MCF 10A (cell line): ENCODE measurements at regions of chr9 and their contacts with region 1.

Region 1: GRCh38 chr9:128361986-128362646 is 9.1 kb upstream of the URM1 start:
- DNase-seq: peak; percentile 86
- H3K4me3 Mint-ChIP-seq: peak overlapping the region; percentile 82
- H3K27ac Mint-ChIP-seq: no peak overlapping the region
- H3K4me1 Mint-ChIP-seq: peaks cover 6% of the 10 kb centered on the region
- H3K27me3 Mint-ChIP-seq: no peaks in the 10 kb centered on the region
- CTCF ChIP-seq: peak; percentile 87

Region 2: GRCh38 chr9:128322404-128323211 is 39.5 kb before region 1 on chr9 and contains the starts of genes COQ4 and TRUB2:
- CTCF ChIA-PET with region 1: interaction called, 10 read pairs
- POLR2A ChIA-PET with region 1: no interaction called
- intact Hi-C with region 1: no loop called
- DNase-seq: peak; percentile 95
- H3K4me3 Mint-ChIP-seq: peak within 1 kb of the TSS; percentile 86
- H3K27ac Mint-ChIP-seq: peak within 1 kb of the TSS; percentile 95
- H3K4me1 Mint-ChIP-seq: peaks cover 8% of the 10 kb centered on the region
- H3K27me3 Mint-ChIP-seq: no peaks in the 10 kb centered on the region
- CTCF ChIP-seq: no peak
- total RNA-seq, gene COQ4: 57.1 and 58.9 TPM in 2 replicates
- total RNA-seq, gene TRUB2: 36.1 and 37.6 TPM in 2 replicates

Region 3: DNA sequence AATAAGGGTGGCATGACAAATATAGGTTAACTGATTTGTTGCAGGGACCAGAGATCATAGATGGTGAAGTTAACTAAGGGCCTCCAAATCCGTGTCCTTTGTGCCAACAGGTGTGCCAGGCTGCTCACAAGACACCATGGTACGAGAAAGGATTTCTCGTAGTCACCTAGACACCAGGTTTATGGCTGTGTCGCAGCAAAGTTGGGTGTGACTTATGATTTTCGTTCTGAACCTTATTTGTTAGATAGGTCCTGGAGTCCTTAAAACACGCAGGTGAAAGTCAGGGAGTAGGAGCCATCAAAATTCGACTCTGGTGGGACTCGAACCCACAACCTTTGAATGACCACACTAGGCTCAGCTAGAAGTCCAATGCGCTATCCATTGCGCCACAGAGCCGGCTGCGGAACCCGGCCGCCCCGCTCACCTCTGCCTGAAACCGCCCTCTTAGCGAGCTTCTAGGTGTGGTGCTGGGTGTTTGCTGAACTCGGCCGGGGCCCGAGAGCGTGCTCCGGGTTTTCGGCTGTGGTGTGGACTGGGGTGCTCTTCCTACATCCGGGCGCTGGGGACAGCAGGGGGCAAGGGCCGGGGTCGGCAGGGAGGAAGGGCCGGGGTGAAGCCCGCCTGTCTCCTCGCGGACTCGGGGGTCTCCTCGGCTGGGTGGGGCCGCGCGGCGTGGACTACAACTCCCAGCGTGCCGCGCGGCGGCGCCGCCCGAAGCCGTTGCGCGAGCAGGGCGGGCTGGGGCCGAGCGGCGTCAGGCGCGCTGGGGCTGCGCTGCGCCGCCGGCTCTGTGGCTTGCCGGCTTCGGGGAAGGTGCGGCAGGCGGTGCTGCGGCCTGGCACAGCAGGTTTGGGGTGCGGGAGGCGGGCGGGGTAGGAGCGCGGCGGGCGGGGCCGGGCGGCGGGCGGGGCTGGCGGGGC is 22.1 kb before region 1 on chr9 and contains the start of gene SLC27A4:
- CTCF ChIA-PET with region 1: interaction called, 10 read pairs
- POLR2A ChIA-PET with region 1: interaction called, 4 read pairs
- intact Hi-C with region 1: no loop called
- DNase-seq: peak; percentile 91
- H3K4me3 Mint-ChIP-seq: peak within 1 kb of the TSS; percentile 92
- H3K27ac Mint-ChIP-seq: peak within 1 kb of the TSS; percentile 93
- H3K4me1 Mint-ChIP-seq: peaks cover 6% of the 10 kb centered on the region
- H3K27me3 Mint-ChIP-seq: no peaks in the 10 kb centered on the region
- CTCF ChIP-seq: no peak
- total RNA-seq, gene SLC27A4: 17.0 and 18.8 TPM in 2 replicates

Region 4: GRCh38 chr9:128412120-128412790 is 50.1 kb after region 1 on chr9:
- CTCF ChIA-PET with region 1: interaction called, 11 read pairs
- POLR2A ChIA-PET with region 1: interaction called, 3 read pairs
- intact Hi-C with region 1: loop called (anchors 10 kb)
- DNase-seq: peak; percentile 43
- H3K4me3 Mint-ChIP-seq: no peak overlapping the region
- H3K27ac Mint-ChIP-seq: no peak overlapping the region
- H3K4me1 Mint-ChIP-seq: no peaks in the 10 kb centered on the region
- H3K27me3 Mint-ChIP-seq: peaks cover 35% of the 10 kb centered on the region
- CTCF ChIP-seq: peak; percentile 49

Region 5: DNA sequence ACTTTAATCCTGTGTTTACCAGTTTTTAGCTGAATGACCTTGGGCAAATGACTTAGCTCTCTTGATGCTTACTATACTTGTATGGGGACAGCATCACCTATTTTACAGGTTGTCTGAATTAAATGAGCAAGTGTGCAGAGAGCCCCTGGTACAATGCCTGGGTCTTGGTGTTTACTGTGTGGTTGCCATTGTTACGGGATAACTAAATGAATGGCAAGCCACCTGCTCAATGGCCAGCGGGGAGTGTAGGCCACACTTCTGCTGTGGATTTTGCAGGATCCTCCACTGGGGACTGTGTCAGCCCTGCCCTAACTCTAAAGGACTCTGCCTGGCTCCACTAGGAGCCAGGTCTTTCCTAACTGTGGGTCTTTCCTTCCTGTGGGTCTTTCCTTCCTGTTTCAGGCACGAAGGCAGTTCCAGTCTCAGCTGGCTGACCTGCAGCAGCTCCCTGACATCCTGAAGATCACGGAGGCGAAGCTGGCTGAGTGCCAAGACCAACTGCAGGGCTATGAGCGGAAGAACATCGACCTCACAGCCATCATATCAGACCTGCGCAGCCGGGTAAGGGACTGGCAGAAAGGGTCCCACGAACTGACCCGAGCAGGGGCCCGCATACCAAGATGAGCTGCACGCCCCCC is 132.1 kb after region 1 on chr9:
- CTCF ChIA-PET with region 1: no interaction called
- POLR2A ChIA-PET with region 1: no interaction called
- intact Hi-C with region 1: no loop called
- DNase-seq: no peak
- H3K4me3 Mint-ChIP-seq: no peak overlapping the region
- H3K27ac Mint-ChIP-seq: no peak overlapping the region
- H3K4me1 Mint-ChIP-seq: no peaks in the 10 kb centered on the region
- H3K27me3 Mint-ChIP-seq: no peaks in the 10 kb centered on the region
- CTCF ChIP-seq: no peak

Region 6: GRCh38 chr9:128504485-128505413 is 142.6 kb after region 1 on chr9 and contains the start of gene GLE1:
- CTCF ChIA-PET with region 1: interaction called, 5 read pairs
- POLR2A ChIA-PET with region 1: interaction called, 8 read pairs
- intact Hi-C with region 1: loop called (anchors 1 kb)
- DNase-seq: peak; percentile 93
- H3K4me3 Mint-ChIP-seq: peak within 1 kb of the TSS; percentile 89
- H3K27ac Mint-ChIP-seq: peak within 1 kb of the TSS; percentile 84
- H3K4me1 Mint-ChIP-seq: no peaks in the 10 kb centered on the region
- H3K27me3 Mint-ChIP-seq: no peaks in the 10 kb centered on the region
- CTCF ChIP-seq: no peak
- total RNA-seq, gene GLE1: 34.1 TPM in 2 replicates